ENCODE measurements at regions of chr14 and their contacts with region 1.

Region 1: GRCh38 chr14:58637391-58638230 is at the start of gene DACT1:
- DNase-seq: peak; percentile 39
- ATAC-seq: peak; percentile 49
- H3K4me3 ChIP-seq: peak within 1 kb of the TSS; percentile 63
- H3K27ac ChIP-seq: no peak within 1 kb of the TSS
- H3K4me1 ChIP-seq: peaks cover 16% of the 10 kb centered on the region
- H3K27me3 ChIP-seq: peaks cover 62% of the 10 kb centered on the region
- CTCF ChIP-seq: no peak
- total RNA-seq, gene DACT1: 0.40 and 1.8 TPM in 2 replicates

Region 2: GRCh38 chr14:58731465-58732330 is 94.1 kb after region 1 on chr14:
- CTCF ChIA-PET with region 1: no interaction called
- POLR2A ChIA-PET with region 1: no interaction called
- intact Hi-C with region 1: loop called (anchors 2 kb)
- DNase-seq: peak; percentile 100
- ATAC-seq: peak; percentile 94
- H3K4me3 ChIP-seq: peak overlapping the region; percentile 1; the same call in 1 of the 2 replicates
- H3K27ac ChIP-seq: peak overlapping the region; percentile 85
- H3K4me1 ChIP-seq: peaks cover 31% of the 10 kb centered on the region
- H3K27me3 ChIP-seq: no peaks in the 10 kb centered on the region
- CTCF ChIP-seq: no peak

Region 3: DNA sequence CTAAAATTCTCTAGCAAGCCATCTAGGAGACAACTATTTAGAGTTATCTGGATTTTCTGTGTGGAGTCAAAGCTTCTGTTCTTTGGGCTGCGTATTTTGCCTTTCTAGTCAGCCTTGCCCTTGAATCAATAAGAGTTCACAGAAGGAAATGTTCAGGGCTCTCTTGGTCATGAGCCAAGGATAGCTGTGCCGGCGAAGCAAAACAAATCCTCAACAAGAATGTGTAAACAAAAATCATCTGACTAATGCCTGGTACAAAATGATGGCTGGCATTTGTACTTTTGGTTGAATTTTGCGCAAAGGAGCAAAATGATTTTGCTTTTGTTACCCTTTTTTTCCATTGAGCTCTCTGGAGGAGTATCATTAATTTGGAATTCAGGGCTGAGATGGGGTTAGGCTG is 171.2 kb after region 1 on chr14:
- CTCF ChIA-PET with region 1: no interaction called
- POLR2A ChIA-PET with region 1: no interaction called
- intact Hi-C with region 1: loop called (anchors 5 kb)
- DNase-seq: peak; percentile 87
- ATAC-seq: peak; percentile 51
- H3K4me3 ChIP-seq: no peak overlapping the region
- H3K27ac ChIP-seq: no peak overlapping the region
- H3K4me1 ChIP-seq: peaks cover 7% of the 10 kb centered on the region
- H3K27me3 ChIP-seq: peaks cover 55% of the 10 kb centered on the region
- CTCF ChIP-seq: no peak

Region 4: GRCh38 chr14:59020382-59020781 is 382.8 kb after region 1 on chr14:
- CTCF ChIA-PET with region 1: interaction called, 3 read pairs
- POLR2A ChIA-PET with region 1: interaction called, 4 read pairs
- intact Hi-C with region 1: loop called (anchors 1 kb)
- DNase-seq: peak; percentile 77
- ATAC-seq: peak; percentile 86
- H3K4me3 ChIP-seq: no peak overlapping the region
- H3K27ac ChIP-seq: no peak overlapping the region
- H3K4me1 ChIP-seq: no peaks in the 10 kb centered on the region
- H3K27me3 ChIP-seq: peaks cover 49% of the 10 kb centered on the region
- CTCF ChIP-seq: peak; percentile 97

Region 5: GRCh38 chr14:59055439-59056045 is 417.9 kb after region 1 on chr14:
- CTCF ChIA-PET with region 1: interaction called, 4 read pairs
- POLR2A ChIA-PET with region 1: no interaction called
- intact Hi-C with region 1: loop called (anchors 1 kb)
- DNase-seq: peak; percentile 92
- ATAC-seq: peak; percentile 99
- H3K4me3 ChIP-seq: no peak overlapping the region
- H3K27ac ChIP-seq: no peak overlapping the region
- H3K4me1 ChIP-seq: no peaks in the 10 kb centered on the region
- H3K27me3 ChIP-seq: peaks cover 20% of the 10 kb centered on the region
- CTCF ChIP-seq: peak; percentile 100

Region 6: GRCh38 chr14:59140106-59140843 is 502.7 kb after region 1 on chr14:
- CTCF ChIA-PET with region 1: no interaction called
- POLR2A ChIA-PET with region 1: no interaction called
- intact Hi-C with region 1: no loop called
- DNase-seq: no peak
- ATAC-seq: no peak
- H3K4me3 ChIP-seq: no peak overlapping the region
- H3K27ac ChIP-seq: no peak overlapping the region
- H3K4me1 ChIP-seq: no peaks in the 10 kb centered on the region
- H3K27me3 ChIP-seq: peaks cover 58% of the 10 kb centered on the region
- CTCF ChIP-seq: no peak

Region 7: DNA sequence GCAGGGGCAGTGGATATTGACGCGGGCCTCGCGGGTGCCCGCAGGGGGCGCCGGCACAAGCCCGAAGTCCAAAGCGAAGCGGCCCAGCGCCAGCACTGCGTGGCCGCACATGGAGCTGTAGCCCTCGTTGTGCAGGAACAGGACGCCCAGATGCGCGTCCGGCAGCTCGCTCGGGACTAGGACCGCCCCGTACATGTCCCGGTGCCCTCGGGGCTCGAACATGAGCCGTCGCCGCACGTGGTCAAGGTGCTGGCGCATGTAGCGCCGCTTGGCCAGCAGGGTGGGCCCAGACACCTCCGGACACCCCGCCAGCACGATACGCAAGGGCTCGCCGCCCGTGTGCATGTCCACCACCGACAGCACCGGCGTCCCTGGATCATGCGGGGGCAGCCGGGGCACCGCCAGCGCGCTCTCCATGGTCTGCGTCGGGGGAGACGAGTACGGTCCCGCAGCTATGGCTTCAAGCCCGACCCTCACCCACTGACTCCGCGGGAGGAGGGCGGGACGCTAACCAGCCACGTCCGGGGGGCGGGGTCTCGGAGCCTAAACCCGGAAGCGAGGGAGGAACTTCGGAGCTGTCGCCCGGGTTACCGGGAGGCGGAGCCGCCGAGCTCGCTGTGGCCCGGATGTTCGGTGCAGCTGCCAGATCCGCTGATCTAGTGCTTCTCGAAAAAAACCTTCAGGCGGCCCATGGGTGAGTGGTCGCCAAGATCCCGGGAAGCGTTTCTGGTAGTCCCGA is 846.5 kb after region 1 on chr14 and contains the starts of genes JKAMP and L3HYPDH:
- CTCF ChIA-PET with region 1: no interaction called
- POLR2A ChIA-PET with region 1: interaction called, 13 read pairs
- intact Hi-C with region 1: no loop called
- DNase-seq: peak; percentile 100
- ATAC-seq: peak; percentile 75
- H3K4me3 ChIP-seq: peak within 1 kb of the TSS; percentile 79
- H3K27ac ChIP-seq: peak within 1 kb of the TSS; percentile 83
- H3K4me1 ChIP-seq: peaks cover 42% of the 10 kb centered on the region
- H3K27me3 ChIP-seq: no peaks in the 10 kb centered on the region
- CTCF ChIP-seq: peak; percentile 92
- total RNA-seq, gene JKAMP: 130 and 147 TPM in 2 replicates
- total RNA-seq, gene L3HYPDH: 108 and 117 TPM in 2 replicates

Measured in PC-3 (cell line).